ENCODE measurements at regions of chr11 and their contacts with region 1.

Region 1: DNA sequence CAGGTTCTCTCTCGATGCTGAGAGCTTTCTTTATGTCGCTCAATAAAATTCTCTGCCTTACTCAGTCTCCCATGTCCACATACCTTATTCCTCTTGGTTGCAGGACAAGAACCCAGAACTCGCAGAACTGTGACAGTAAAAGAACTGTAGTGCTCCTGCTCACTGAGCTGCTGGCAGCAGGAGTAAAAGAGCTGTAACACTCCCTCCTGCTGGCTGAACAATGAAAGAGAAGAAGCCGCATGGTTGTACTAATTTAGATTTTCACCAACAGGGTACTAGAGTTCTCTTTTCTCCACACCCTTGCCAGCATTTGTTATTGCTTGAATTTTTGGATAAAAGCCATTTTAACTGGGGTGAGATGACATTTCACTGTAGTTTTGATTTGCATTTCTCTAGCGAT is 433.2 kb downstream of the GUCY1A2 start:
- DNase-seq: peak in 1 of 2 experiments; percentile 3
- H3K4me3 ChIP-seq: no peak overlapping the region
- H3K27ac ChIP-seq: no peak overlapping the region
- H3K4me1 ChIP-seq: no peaks in the 10 kb centered on the region
- H3K27me3 ChIP-seq: no peaks in the 10 kb centered on the region
- CTCF ChIP-seq: peak in 2 of 3 experiments; percentile 63 to 80; a peak in 3 of 4 replicates
- EP300 ChIP-seq: no peak
- POLR2A ChIP-seq: no peak
- RAD21 ChIP-seq: peak; percentile 89 to 90

Region 2: DNA sequence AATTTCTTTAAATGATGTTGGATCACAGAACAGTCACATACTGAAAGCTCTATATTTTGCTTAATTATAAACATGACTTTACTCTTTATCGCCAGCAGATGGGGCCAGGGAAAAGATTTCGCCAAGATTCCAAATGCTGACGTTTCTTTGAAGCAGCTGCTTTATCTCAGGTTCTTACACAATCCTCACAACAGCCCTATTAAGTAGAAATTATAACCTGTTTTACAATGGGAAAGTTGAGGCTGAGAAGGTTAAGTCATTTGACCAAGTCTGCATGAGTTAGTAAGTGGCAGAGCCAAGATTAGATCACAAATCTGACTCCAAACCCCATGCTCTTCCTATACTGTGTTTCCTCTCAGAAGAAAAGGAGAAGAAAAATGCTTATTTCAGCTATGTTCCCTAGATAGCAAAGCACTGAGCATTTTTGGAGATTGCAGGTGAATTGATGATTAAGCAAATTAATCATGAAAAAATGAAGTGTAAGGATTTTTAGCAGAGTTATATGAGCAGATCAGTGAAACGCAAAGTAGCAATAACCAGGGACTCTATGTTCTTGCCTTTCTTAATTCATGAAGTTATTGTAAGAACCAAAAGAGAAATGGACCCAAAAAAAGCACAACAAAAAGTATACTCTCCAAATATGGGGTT is 428.6 kb before region 1 on chr11:
- CTCF ChIA-PET with region 1: interaction called, 10 read pairs
- POLR2A ChIA-PET with region 1: no interaction called
- DNase-seq: no peak
- H3K4me3 ChIP-seq: no peak overlapping the region
- H3K27ac ChIP-seq: no peak overlapping the region
- H3K4me1 ChIP-seq: no peaks in the 10 kb centered on the region
- H3K27me3 ChIP-seq: peaks cover 0 to 2% (median 0%) of the 10 kb centered on the region in 4 experiments; a peak in 1 of 7 replicates
- CTCF ChIP-seq: peak in 2 of 3 experiments; percentile 48 to 49; a peak in 3 of 4 replicates
- EP300 ChIP-seq: no peak
- POLR2A ChIP-seq: no peak
- RAD21 ChIP-seq: peak; percentile 66 to 71

Region 3: DNA sequence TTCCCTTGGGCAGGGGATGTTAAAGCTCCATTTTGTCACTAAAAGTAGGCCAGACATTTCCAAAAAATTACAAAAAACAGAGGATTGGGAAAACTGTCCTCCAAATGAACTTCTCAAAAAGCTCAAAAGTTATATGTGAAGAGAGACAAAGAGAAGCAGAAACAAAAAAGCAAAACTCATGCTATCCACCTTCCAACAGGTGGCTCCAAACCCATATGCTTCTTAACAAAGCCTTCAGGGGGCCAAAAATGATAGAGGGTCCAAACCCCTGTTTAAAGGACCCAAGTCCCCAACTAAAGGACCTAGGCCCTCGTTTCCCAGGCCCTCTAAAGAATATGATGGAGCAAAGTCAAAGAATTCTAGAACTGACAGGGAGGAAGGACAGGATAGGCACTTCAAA is 360.9 kb before region 1 on chr11:
- CTCF ChIA-PET with region 1: interaction called, 14 read pairs
- POLR2A ChIA-PET with region 1: no interaction called
- DNase-seq: no peak
- H3K4me3 ChIP-seq: no peak overlapping the region
- H3K27ac ChIP-seq: no peak overlapping the region
- H3K4me1 ChIP-seq: no peaks in the 10 kb centered on the region
- H3K27me3 ChIP-seq: no peaks in the 10 kb centered on the region
- CTCF ChIP-seq: peak in 2 of 3 experiments; percentile 12 to 35; a peak in 2 of 4 replicates
- EP300 ChIP-seq: no peak
- POLR2A ChIP-seq: no peak
- RAD21 ChIP-seq: peak; percentile 62 to 65

Region 4: DNA sequence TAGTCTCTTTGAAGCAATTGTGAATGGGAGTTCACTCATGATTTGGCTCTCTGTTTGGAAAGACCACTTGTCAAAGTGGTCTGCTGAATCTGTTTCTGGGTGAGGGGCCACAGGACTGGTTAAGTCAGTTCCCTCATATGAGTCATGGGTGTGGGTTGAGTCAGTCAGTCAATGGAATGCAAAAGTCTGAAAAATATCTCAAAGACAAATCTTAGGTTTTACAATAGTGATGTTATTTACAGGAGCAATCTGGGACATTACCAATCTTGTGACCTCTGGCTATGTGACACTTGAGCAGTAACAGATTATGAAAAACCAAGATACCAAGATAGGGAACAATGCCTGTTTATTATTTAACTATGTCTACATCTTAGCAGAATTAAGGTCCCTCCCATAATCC is 196.0 kb before region 1 on chr11:
- CTCF ChIA-PET with region 1: no interaction called
- POLR2A ChIA-PET with region 1: no interaction called
- DNase-seq: no peak
- H3K4me3 ChIP-seq: no peak overlapping the region
- H3K27ac ChIP-seq: no peak overlapping the region
- H3K4me1 ChIP-seq: peaks cover 0 to 3% (median 0%) of the 10 kb centered on the region in 4 experiments; a peak in 2 of 7 replicates
- H3K27me3 ChIP-seq: no peaks in the 10 kb centered on the region
- CTCF ChIP-seq: no peak
- EP300 ChIP-seq: no peak
- POLR2A ChIP-seq: no peak
- RAD21 ChIP-seq: no peak